Right ventricle myocardium superior (tissue), 1 donor: ENCODE measurements at regions of chr2 and their contacts with region 1.

Region 1: DNA sequence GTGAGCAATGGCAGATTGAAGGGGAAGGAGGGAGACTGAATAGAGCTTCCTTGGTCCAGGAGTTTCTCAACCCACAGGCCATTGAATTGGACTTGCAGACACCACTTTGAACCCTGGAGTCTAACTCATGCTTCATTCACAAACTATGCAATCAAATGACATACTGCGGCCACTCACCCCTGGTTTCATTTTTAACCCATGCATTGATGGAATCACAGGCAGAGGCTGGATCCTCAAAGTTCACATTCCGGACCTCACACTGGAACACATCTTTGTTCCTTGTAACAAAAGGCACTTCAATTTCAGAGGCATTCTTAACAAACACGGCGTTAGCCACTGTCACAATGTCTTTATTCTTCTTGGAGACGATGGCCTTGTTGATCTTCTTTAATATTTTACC is 40.7 kb downstream of the MRPL44 start:
- DNase-seq: no peak
- ATAC-seq: no peak

Region 2: DNA sequence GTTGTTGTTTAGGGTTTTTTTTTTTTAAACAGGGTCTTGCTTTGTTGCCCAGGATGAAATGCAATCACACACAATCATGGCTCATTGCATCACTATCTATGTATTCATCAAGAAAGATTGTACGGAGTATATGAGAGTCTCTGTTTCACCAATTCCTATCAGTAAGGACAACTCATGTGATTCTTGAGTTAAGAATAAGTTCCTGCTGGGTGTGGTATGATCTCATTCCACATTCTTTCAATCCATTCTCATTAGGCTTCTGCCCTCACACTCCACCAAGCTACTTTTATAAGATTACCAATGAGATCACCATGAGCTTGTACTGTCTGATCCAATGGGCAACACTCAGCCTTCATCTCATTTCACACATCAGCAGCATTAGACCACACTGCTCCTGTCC is 151.4 kb before region 1 on chr2:
- intact Hi-C with region 1: no loop called
- DNase-seq: no peak
- ATAC-seq: no peak

Region 3: DNA sequence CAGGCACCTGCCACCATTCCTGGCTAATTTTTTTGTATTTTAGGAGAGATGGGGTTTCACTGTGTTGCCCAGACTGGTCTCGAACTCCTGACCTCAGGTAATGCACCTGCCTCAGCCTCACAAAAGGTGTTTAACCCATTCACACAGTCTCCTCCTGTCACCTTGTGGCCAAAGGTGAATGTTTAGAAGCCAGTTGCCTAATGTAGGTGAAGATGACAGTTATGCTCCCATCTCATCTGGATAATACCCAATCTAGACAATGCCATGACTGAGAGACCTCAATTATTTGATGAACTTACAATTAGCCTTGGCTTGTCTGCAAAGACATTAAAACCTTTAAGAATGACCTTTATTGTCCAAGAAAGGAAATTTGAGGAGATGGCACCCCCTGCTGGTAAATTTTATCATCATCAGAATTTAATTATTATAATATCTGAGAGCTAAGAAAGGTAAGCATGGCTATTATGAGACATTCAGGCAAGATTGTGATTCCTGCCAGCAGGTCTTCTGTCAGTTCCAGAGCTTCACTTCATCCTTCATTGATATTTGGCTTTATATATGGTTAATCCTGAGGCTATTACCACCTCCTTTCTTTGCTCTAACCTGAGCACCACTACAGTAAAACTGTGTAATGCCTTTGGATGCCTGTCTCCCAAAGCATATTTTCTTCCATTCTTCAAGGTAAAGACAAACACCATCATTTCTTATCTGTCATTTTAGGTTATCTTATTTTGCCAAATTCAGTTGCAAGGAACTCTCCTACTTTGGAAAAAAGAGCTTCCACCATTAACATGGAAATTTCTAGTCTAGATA is 286.4 kb after region 1 on chr2:
- intact Hi-C with region 1: loop called (anchors 2 kb)
- DNase-seq: no peak
- ATAC-seq: no peak